ENCODE measurements at regions of chr7 and their contacts with region 1.

Region 1: GRCh38 chr7:50467817-50468610 is 17.9 kb upstream of the FIGNL1 start:
- DNase-seq: peak; percentile 80
- H3K4me3 Mint-ChIP-seq: no peak overlapping the region
- H3K27ac Mint-ChIP-seq: no peak overlapping the region
- H3K4me1 Mint-ChIP-seq: peaks cover 7% of the 10 kb centered on the region
- H3K27me3 Mint-ChIP-seq: no peaks in the 10 kb centered on the region
- CTCF ChIP-seq: peak; percentile 91

Region 2: DNA sequence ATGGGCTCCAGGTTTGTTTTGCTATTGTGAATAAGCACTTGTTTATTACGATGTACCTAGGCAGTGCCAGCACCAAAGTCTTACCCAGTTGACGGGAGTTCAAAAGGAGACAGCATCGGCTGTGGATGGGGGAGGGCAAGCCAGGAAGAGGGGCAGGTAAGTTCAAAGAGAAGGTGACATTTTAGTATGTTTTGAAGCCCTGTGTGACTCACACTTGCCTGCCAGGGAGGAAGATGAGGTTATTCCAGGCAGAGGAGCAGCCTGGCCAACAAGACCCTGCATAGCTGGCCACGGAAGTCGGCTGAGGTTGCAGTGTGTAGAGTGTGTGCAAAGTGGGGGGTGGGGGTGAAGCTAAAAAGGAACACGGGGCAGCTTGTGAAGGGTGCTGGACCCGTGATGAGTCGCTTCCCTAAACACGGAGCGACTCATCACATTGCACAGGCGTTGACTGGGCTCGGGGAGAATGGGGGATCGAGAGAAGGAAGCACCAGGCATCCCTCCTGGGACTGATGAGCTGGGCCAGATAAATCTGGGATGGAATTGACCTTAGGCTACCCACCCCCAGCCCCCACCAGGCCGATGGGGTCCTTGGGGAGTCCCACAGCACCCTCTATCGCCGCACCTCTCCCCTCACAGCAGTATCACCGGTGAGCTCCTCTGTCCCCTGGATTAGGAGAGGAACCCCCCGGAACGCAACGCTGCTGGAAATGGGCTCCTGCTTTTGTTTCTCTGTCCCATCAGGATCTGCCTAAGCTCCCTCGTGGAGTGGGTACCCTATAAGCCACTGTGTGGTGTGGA is 261.4 kb before region 1 on chr7:
- CTCF ChIA-PET with region 1: interaction called, 18 read pairs
- POLR2A ChIA-PET with region 1: no interaction called
- intact Hi-C with region 1: no loop called
- DNase-seq: no peak
- H3K4me3 Mint-ChIP-seq: no peak overlapping the region
- H3K27ac Mint-ChIP-seq: no peak overlapping the region
- H3K4me1 Mint-ChIP-seq: no peaks in the 10 kb centered on the region
- H3K27me3 Mint-ChIP-seq: peaks cover 56% of the 10 kb centered on the region
- CTCF ChIP-seq: no peak

Region 3: GRCh38 chr7:50486512-50486911 is 18.5 kb after region 1 on chr7:
- CTCF ChIA-PET with region 1: interaction called, 15 read pairs
- POLR2A ChIA-PET with region 1: interaction called, 8 read pairs
- intact Hi-C with region 1: no loop called
- DNase-seq: no peak
- H3K4me3 Mint-ChIP-seq: no peak overlapping the region
- H3K27ac Mint-ChIP-seq: no peak overlapping the region
- H3K4me1 Mint-ChIP-seq: no peaks in the 10 kb centered on the region
- H3K27me3 Mint-ChIP-seq: no peaks in the 10 kb centered on the region
- CTCF ChIP-seq: no peak

Region 4: GRCh38 chr7:50540785-50541579 is 73.0 kb after region 1 on chr7:
- CTCF ChIA-PET with region 1: interaction called, 11 read pairs
- POLR2A ChIA-PET with region 1: no interaction called
- intact Hi-C with region 1: no loop called
- DNase-seq: no peak
- H3K4me3 Mint-ChIP-seq: no peak overlapping the region
- H3K27ac Mint-ChIP-seq: no peak overlapping the region
- H3K4me1 Mint-ChIP-seq: no peaks in the 10 kb centered on the region
- H3K27me3 Mint-ChIP-seq: no peaks in the 10 kb centered on the region
- CTCF ChIP-seq: no peak

Region 5: GRCh38 chr7:50632561-50633413 is 164.8 kb after region 1 on chr7:
- CTCF ChIA-PET with region 1: interaction called, 187 read pairs
- POLR2A ChIA-PET with region 1: interaction called, 3 read pairs
- intact Hi-C with region 1: loop called (anchors 1 kb)
- DNase-seq: peak; percentile 74
- H3K4me3 Mint-ChIP-seq: no peak overlapping the region
- H3K27ac Mint-ChIP-seq: no peak overlapping the region
- H3K4me1 Mint-ChIP-seq: peaks cover 15% of the 10 kb centered on the region
- H3K27me3 Mint-ChIP-seq: no peaks in the 10 kb centered on the region
- CTCF ChIP-seq: peak; percentile 79

Region 6: GRCh38 chr7:50793115-50793946 is 325.3 kb after region 1 on chr7:
- CTCF ChIA-PET with region 1: interaction called, 3 read pairs
- POLR2A ChIA-PET with region 1: no interaction called
- intact Hi-C with region 1: loop called (anchors 5 kb)
- DNase-seq: peak; percentile 62
- H3K4me3 Mint-ChIP-seq: peak overlapping the region; percentile 54
- H3K27ac Mint-ChIP-seq: no peak overlapping the region
- H3K4me1 Mint-ChIP-seq: peaks cover 13% of the 10 kb centered on the region
- H3K27me3 Mint-ChIP-seq: no peaks in the 10 kb centered on the region
- CTCF ChIP-seq: no peak

Region 7: DNA sequence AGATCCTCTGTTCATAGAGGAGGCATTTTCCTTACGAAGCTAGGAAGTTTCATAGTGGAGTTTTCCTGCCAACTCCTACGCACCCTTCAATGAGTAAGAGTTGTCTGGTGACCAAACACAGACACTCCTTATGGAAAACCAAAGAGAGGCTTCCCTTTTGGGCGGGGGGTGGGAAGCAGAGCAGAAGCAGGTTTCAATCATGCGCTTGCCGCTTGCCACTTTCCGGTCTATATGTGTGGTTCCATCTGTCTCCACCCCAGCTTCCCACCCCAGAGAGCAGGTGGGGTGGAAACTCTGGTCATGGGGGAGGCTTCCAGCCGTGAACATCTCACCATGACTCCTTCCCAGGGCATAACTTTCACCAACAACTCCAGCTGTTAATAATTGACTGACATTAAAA is 383.4 kb after region 1 on chr7:
- CTCF ChIA-PET with region 1: no interaction called
- POLR2A ChIA-PET with region 1: no interaction called
- intact Hi-C with region 1: no loop called
- DNase-seq: peak; percentile 55
- H3K4me3 Mint-ChIP-seq: no peak overlapping the region
- H3K27ac Mint-ChIP-seq: no peak overlapping the region
- H3K4me1 Mint-ChIP-seq: no peaks in the 10 kb centered on the region
- H3K27me3 Mint-ChIP-seq: no peaks in the 10 kb centered on the region
- CTCF ChIP-seq: no peak

Measured in MCF 10A (cell line).